Right ventricle myocardium inferior (tissue), 1 donor: ENCODE measurements at regions of chr2 and their contacts with region 1.

Region 1: GRCh38 chr2:109238580-109238979 is 109.6 kb downstream of the SH3RF3 start:
- DNase-seq: peak; percentile 91
- ATAC-seq: peak; percentile 52

Region 2: DNA sequence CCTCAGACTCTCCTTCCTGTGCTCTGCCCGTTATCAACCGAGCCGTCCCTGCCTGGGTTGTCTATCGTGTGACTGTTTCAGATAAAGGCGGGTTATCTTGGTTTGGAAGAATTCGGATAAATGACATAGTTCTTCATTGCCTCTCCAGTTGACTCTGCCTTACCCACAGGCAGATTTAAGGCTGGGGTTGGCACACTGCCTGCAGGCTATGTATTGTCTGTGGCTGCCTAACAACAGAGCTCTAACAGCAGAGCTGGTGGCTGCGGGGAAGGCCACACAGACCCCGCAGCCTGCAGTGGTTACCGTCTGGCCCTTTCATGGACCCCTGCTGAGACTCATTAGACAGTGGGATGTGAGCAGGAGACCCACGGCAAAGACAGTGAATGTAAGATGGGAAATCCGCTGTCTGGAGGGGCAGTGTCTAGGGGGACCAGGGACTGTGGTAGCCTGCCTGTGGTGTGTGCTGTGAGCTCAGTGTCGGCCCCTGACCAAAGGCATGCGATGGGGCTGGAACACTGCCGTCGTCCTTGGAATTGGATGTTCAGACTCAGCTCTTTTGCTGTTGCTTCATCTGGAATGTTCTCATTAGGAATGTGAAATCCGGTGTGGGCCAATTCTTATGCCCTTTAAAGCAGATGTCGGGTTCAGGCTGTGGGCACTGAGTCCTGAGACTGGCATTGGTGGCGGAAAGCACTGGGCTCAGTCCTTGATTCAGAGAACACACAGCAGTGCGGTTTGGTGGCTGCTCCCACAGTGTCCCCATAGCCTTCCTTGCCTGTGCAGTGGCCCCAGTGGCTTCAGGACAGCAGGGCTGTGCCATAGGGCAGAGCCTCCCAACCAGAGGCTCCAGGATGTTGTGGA is 65.0 kb before region 1 on chr2:
- intact Hi-C with region 1: loop called (anchors 5 kb)
- DNase-seq: peak; percentile 87
- ATAC-seq: peak; percentile 84

Region 3: GRCh38 chr2:109201465-109202327 is 36.9 kb before region 1 on chr2:
- intact Hi-C with region 1: loop called (anchors 1 kb)
- DNase-seq: no peak
- ATAC-seq: peak; percentile 62

Region 4: DNA sequence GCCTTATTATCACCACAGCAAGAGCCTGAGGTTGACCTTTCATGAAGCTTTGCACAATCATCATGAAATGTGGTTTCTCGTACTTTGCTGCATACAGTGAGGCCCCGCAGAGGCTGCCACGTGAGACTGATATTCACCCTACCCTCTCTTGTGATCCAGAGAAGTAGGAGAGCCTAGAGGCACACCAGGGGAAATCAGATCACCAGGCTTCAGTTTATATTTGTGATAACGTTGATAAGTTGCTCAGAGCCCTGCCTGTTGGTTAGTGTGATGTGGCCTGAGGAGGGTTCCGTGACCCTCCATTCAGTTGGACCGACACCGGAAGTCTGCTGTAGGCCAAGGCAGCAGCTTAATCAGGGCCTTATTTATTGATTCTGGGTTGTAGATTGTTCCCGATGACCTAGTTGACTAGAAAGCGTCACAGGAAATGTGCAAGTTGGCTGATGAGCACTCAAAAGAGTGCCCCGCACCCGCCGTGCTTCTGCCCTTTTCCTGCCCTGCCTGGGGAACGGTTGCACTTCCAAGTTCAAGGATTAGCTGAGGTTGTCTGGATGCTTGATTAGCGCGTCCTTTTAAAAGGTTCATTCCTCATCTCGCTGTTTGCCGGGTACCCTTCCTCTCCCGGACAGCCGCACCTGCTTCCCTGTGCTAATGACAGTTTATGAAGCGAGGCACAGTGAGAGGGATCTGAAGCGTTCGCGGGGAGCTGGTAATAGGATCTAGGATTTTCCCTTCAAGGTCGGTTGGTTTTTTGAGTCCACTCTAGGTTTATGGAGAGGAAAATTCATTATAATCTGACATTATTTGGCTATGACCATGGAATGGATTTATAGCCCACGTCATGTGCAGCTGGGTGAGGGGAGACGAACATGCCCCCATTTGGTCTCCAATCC is 36.8 kb after region 1 on chr2:
- intact Hi-C with region 1: loop called (anchors 5 kb)
- DNase-seq: no peak
- ATAC-seq: no peak

Region 5: GRCh38 chr2:109299536-109299935 is 61.0 kb after region 1 on chr2:
- intact Hi-C with region 1: no loop called
- DNase-seq: no peak
- ATAC-seq: no peak